ENCODE measurements at regions of chr20 and their contacts with region 1.

Region 1: GRCh38 chr20:17898548-17898994 is 70.0 kb downstream of the SNX5 start:
- DNase-seq: peak; percentile 46 to 62 (median 56)
- ATAC-seq: peak; percentile 74
- H3K4me3 ChIP-seq: no peak overlapping the region
- H3K27ac ChIP-seq: no peak overlapping the region
- H3K4me1 ChIP-seq: peaks cover 9 to 16% of the 10 kb centered on the region in 2 experiments
- H3K27me3 ChIP-seq: 0 out of 5 replicates have a peak, but pooled peaks cover 0 to 5% of the 10 kb centered on the region in 2 experiments
- CTCF ChIP-seq: peak; percentile 70 to 81 (median 74)
- EP300 ChIP-seq: no peak
- POLR2A ChIP-seq: no peak
- RAD21 ChIP-seq: peak; percentile 76 to 79

Region 2: DNA sequence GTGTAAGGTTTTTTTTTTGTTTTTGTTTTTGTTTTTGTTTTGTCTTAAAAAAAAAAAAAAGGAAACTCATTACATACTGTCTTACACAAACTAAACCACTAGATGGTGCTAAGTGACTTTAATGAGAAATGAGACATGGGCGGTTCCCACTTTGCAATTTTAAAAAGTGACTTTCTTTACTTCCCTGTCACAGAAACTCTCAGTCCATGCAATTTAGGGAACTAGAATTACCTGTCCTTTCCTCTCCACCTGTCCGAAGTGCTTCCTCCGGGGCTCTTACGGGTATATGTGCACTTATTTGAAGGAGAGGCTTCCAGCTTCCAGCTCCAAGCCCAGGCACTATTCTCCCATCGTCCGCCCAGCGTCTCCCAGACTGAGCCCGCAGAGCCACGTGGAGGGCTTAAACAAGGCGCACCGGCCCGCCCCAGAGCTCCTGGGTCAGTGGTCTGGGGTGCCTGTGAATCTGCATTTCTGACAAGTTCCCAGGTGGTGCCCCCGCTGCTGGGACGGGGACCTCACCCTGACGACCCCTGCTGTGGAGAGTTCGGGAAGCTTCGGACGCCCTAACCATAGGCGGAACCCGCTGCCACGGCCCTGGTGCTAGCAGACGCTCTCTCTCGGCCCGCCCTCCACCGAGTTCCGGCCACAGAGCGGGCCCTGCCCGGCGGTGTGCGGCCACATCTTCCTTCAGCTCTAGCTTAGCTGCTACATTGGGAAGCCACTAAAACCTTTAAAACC is 393.5 kb before region 1 on chr20:
- CTCF ChIA-PET with region 1: no interaction called
- POLR2A ChIA-PET with region 1: no interaction called
- in situ Hi-C with region 1: no loop called
- intact Hi-C with region 1: loop called (anchors 5 kb)
- DNase-seq: peak; percentile 19 to 43 (median 24)
- ATAC-seq: peak; percentile 76
- H3K4me3 ChIP-seq: no peak overlapping the region
- H3K27ac ChIP-seq: no peak overlapping the region
- H3K4me1 ChIP-seq: peaks cover 6 to 23% of the 10 kb centered on the region in 2 experiments
- H3K27me3 ChIP-seq: peaks cover 0 to 16% of the 10 kb centered on the region in 2 experiments; a peak in 3 of 5 replicates
- CTCF ChIP-seq: peak; percentile 35 to 74 (median 45); a peak in 4 of 6 replicates
- EP300 ChIP-seq: no peak
- POLR2A ChIP-seq: no peak
- RAD21 ChIP-seq: peak; percentile 55 to 61

Region 3: DNA sequence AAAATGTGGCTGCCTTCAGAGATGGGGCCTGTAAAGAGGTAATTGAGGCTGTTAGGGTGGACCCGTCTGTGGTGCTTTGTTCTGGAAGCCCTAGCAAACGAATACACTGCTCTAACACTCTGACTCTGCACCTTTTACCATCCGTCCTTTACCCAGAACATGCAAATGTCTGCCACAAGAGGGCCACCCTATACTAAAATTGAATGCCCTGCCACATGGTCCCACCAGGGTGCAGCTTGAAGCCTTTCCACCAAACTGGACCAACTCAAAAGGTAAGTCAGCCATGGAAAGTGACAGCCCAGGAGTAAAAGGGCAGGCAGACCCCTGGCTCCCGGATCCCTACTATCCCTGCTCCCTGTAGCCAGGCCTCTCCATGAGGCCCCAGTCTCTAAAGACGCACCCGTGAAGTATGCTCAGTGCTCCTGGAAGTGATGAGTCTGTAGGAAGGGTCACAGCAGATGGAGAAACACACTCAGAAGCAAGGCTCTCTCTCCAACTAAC is 361.6 kb before region 1 on chr20:
- CTCF ChIA-PET with region 1: no interaction called
- POLR2A ChIA-PET with region 1: interaction called, 3 read pairs
- in situ Hi-C with region 1: no loop called
- intact Hi-C with region 1: loop called (anchors 10 kb)
- DNase-seq: peak; percentile 68 to 77 (median 72)
- ATAC-seq: peak; percentile 99
- H3K4me3 ChIP-seq: no peak overlapping the region
- H3K27ac ChIP-seq: no peak overlapping the region
- H3K4me1 ChIP-seq: no peaks in the 10 kb centered on the region
- H3K27me3 ChIP-seq: no peaks in the 10 kb centered on the region
- CTCF ChIP-seq: peak; percentile 87 to 98 (median 94)
- EP300 ChIP-seq: no peak
- POLR2A ChIP-seq: no peak
- RAD21 ChIP-seq: peak; percentile 83 to 94

Region 4: GRCh38 chr20:17682103-17682888 is 216.3 kb before region 1 on chr20 and contains the start of gene RRBP1:
- CTCF ChIA-PET with region 1: no interaction called
- POLR2A ChIA-PET with region 1: interaction called, 5 read pairs
- in situ Hi-C with region 1: no loop called
- intact Hi-C with region 1: loop called (anchors 10 kb)
- DNase-seq: peak; percentile 93 to 95 (median 94)
- ATAC-seq: peak; percentile 99
- H3K4me3 ChIP-seq: peak within 1 kb of the TSS; percentile 65
- H3K27ac ChIP-seq: peak within 1 kb of the TSS; percentile 78
- H3K4me1 ChIP-seq: peaks cover 14 to 29% of the 10 kb centered on the region in 2 experiments
- H3K27me3 ChIP-seq: peaks cover 8 to 20% of the 10 kb centered on the region in 2 experiments
- CTCF ChIP-seq: peak; percentile 66 to 81 (median 67)
- EP300 ChIP-seq: no peak
- POLR2A ChIP-seq: peak; percentile 72
- RAD21 ChIP-seq: peak in 1 of 2 experiments; percentile 18; a peak in 2 of 4 replicates
- polyA plus RNA-seq, gene RRBP1: 0.84 to 0.95 TPM

Region 5: GRCh38 chr20:17742401-17743130 is 156.0 kb before region 1 on chr20:
- CTCF ChIA-PET with region 1: no interaction called
- POLR2A ChIA-PET with region 1: no interaction called
- in situ Hi-C with region 1: no loop called
- intact Hi-C with region 1: no loop called
- DNase-seq: no peak
- ATAC-seq: no peak
- H3K4me3 ChIP-seq: no peak overlapping the region
- H3K27ac ChIP-seq: no peak overlapping the region
- H3K4me1 ChIP-seq: no peaks in the 10 kb centered on the region; a peak in 1 of 5 replicates
- H3K27me3 ChIP-seq: no peaks in the 10 kb centered on the region; a peak in 3 of 5 replicates
- CTCF ChIP-seq: no peak
- EP300 ChIP-seq: no peak
- POLR2A ChIP-seq: no peak
- RAD21 ChIP-seq: no peak

Region 6: GRCh38 chr20:17859616-17860232 is 38.8 kb before region 1 on chr20:
- CTCF ChIA-PET with region 1: no interaction called
- POLR2A ChIA-PET with region 1: no interaction called
- in situ Hi-C with region 1: no loop called
- intact Hi-C with region 1: no loop called
- DNase-seq: no peak
- ATAC-seq: no peak
- H3K4me3 ChIP-seq: no peak overlapping the region
- H3K27ac ChIP-seq: no peak overlapping the region
- H3K4me1 ChIP-seq: no peaks in the 10 kb centered on the region
- H3K27me3 ChIP-seq: peaks cover 6 to 53% of the 10 kb centered on the region in 2 experiments; a peak in 4 of 5 replicates
- CTCF ChIP-seq: no peak
- EP300 ChIP-seq: no peak
- POLR2A ChIP-seq: no peak
- RAD21 ChIP-seq: no peak

Region 7: DNA sequence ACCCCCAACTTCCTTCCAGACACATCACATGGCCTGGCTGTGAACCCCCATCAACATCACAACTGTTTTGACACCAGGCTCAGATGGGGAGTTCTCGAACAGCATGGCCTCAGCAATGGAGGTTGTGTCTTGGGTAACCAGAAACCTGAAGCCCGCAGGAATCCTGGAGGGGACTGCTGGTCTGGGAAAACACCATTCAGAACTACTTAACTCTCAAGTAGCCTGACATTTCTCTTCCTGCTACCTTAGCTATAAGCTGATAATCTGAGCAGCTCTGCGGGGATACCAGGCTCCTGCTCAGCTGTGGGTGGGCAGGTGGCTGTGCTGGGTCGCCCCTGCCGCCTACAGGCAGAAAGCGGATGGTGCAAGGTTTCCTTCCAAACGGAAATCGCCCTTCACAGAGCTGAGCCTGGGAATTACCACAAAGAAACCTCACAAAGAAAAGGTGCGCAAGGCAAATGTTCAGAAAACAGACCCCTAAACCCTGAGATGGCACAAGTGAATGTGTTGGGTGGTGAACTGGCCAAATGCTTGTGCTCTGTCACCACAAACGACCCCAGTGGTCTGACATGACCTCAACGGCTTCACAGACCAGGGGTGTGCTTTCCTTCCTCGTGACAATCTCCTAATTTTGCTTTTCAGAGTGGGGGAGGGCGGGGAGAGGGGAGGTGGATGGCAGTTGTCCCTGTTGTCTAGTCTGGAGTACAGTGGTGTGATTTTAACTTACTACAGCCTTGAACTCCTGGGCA is 40.5 kb after region 1 on chr20:
- CTCF ChIA-PET with region 1: interaction called, 5 read pairs
- POLR2A ChIA-PET with region 1: no interaction called
- in situ Hi-C with region 1: no loop called
- intact Hi-C with region 1: loop called (anchors 5 kb)
- DNase-seq: peak; percentile 65 to 76 (median 69)
- ATAC-seq: peak; percentile 89
- H3K4me3 ChIP-seq: no peak overlapping the region
- H3K27ac ChIP-seq: peak overlapping the region; percentile 77
- H3K4me1 ChIP-seq: peaks cover 7 to 23% of the 10 kb centered on the region in 2 experiments; a peak in 4 of 5 replicates
- H3K27me3 ChIP-seq: no peaks in the 10 kb centered on the region
- CTCF ChIP-seq: peak; percentile 80 to 92 (median 88)
- EP300 ChIP-seq: no peak
- POLR2A ChIP-seq: no peak
- RAD21 ChIP-seq: peak; percentile 82 to 86